PC-9 (cell line): ENCODE measurements at regions of chr2 and their contacts with region 1.

Region 1: DNA sequence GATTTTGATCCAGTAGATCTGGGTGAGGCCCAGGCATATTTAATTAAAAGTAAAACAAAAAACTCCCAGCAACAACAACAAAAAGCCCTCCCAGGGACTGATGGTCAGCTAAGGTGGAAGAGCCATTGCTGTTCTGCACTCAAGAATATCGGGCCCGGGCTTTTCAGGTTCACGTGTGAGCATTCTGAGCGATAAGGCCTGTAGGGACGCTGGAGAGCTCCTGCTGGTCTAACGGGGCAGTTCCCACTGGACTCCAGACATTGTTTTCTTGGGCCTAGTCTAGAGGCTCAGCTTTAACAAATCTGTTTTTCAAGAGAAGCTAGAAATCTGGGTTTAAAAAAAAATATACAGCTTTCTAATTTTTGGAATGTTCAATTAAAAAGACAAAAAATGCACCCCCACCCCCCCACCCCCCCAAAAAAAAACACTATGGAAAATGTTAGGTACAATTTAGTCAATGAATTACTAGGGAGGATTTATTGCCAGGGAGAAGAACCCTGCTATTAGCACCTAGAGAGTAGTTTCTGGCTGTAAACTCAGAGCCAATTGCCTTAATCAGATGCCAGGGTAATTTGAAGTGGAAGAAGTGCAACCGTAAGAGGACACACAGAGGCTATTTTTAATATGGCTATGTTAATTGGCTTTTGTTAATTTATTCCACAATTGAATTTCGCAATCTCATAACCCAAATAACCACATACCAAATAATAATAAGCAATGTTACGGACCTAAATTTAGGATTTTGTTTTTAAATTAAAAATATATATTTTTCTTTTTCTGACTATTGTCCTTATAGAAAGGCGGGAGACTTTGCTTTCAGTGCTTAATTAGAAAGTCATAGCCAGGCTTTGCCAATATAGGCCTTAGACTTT is 78.9 kb downstream of the MAP4K4 start:
- DNase-seq: no peak
- H3K4me3 ChIP-seq: no peak overlapping the region
- H3K27ac ChIP-seq: no peak overlapping the region
- H3K4me1 ChIP-seq: no peaks in the 10 kb centered on the region
- H3K27me3 ChIP-seq: no peaks in the 10 kb centered on the region
- CTCF ChIP-seq: no peak

Region 2: GRCh38 chr2:101630224-101630949 is 146.0 kb before region 1 on chr2:
- CTCF ChIA-PET with region 1: interaction called, 13 read pairs
- POLR2A ChIA-PET with region 1: no interaction called
- intact Hi-C with region 1: no loop called
- DNase-seq: peak; percentile 91 to 98
- H3K4me3 ChIP-seq: no peak overlapping the region
- H3K27ac ChIP-seq: peak overlapping the region; percentile 94
- H3K4me1 ChIP-seq: peaks cover 42% of the 10 kb centered on the region
- H3K27me3 ChIP-seq: no peaks in the 10 kb centered on the region
- CTCF ChIP-seq: no peak